Caco-2 (cell line): ENCODE measurements at regions of chr2 and their contacts with region 1.

Region 1: DNA sequence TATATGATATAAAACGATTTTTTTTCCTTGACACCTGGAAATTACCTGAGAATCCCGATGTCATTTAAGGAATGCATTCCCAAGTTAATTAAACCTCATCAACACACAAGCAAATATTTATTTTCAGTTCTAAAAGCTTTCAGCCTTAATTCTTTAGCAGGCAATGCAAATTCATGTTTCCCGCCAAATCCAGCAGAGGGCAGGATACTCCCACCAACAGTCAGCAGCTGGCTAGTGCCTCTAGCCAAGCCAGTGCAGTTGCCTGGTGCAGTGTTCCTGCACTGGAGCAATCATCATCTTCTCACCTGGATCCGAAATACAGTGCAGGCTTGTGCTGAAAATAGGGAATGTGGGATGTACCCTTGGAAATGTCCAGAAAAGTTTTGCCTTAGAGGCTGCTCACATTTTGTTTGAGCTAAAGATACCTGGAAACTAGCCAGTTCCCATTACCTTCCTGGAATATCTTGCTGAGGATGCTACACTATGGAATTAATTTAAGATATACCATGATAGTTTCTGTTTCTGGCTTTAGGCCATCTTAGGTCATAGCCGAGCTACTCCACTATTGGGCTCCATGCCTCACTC is 48.4 kb upstream of the CYTIP start:
- DNase-seq: peak; percentile 63 to 74
- H3K4me3 ChIP-seq: no peak overlapping the region
- H3K4me3 Mint-ChIP-seq: no peak overlapping the region
- H3K27ac Mint-ChIP-seq: no peak overlapping the region
- H3K4me1 ChIP-seq: no peaks in the 10 kb centered on the region
- H3K4me1 Mint-ChIP-seq: no peaks in the 10 kb centered on the region
- H3K27me3 ChIP-seq: no peaks in the 10 kb centered on the region
- H3K27me3 Mint-ChIP-seq: no peaks in the 10 kb centered on the region
- CTCF ChIP-seq: peak; percentile 78 to 87

Region 2: GRCh38 chr2:157327621-157328500 is 164.4 kb before region 1 on chr2:
- CTCF ChIA-PET with region 1: interaction called, 5 read pairs
- POLR2A ChIA-PET with region 1: no interaction called
- intact Hi-C with region 1: loop called (anchors 2 kb)
- DNase-seq: peak; percentile 84 to 85
- H3K4me3 ChIP-seq: no peak overlapping the region
- H3K4me3 Mint-ChIP-seq: no peak overlapping the region
- H3K27ac Mint-ChIP-seq: no peak overlapping the region
- H3K4me1 ChIP-seq: peaks cover 37% of the 10 kb centered on the region
- H3K4me1 Mint-ChIP-seq: peaks cover 11% of the 10 kb centered on the region
- H3K27me3 ChIP-seq: no peaks in the 10 kb centered on the region
- H3K27me3 Mint-ChIP-seq: no peaks in the 10 kb centered on the region
- CTCF ChIP-seq: peak; percentile 92 to 96

Region 3: GRCh38 chr2:157538064-157538463 is 45.8 kb after region 1 on chr2:
- CTCF ChIA-PET with region 1: no interaction called
- POLR2A ChIA-PET with region 1: no interaction called
- intact Hi-C with region 1: no loop called
- DNase-seq: no peak
- H3K4me3 ChIP-seq: no peak overlapping the region
- H3K4me3 Mint-ChIP-seq: no peak overlapping the region
- H3K27ac Mint-ChIP-seq: no peak overlapping the region
- H3K4me1 ChIP-seq: no peaks in the 10 kb centered on the region
- H3K4me1 Mint-ChIP-seq: no peaks in the 10 kb centered on the region
- H3K27me3 ChIP-seq: no peaks in the 10 kb centered on the region
- H3K27me3 Mint-ChIP-seq: no peaks in the 10 kb centered on the region
- CTCF ChIP-seq: no peak

Region 4: DNA sequence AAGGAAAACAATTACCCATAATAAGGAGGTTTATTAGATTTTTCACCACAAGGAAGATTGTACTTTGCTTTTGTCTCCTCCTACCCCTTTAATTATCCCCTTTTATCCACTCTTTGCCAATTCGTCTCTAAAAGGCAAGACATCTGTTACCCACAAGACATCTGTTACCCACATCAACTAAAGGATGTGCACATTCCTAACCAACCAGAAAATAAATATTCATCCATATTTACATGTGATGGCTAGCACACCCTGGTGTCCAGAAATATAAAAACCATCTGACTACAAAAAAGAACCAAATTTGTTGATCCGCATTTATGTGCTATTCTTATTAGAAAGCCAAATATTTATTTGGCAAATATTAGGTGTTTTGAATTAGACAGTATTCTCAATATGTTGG is 100.7 kb after region 1 on chr2:
- CTCF ChIA-PET with region 1: no interaction called
- POLR2A ChIA-PET with region 1: no interaction called
- intact Hi-C with region 1: loop called (anchors 1 kb)
- DNase-seq: no peak
- H3K4me3 ChIP-seq: no peak overlapping the region
- H3K4me3 Mint-ChIP-seq: no peak overlapping the region
- H3K27ac Mint-ChIP-seq: no peak overlapping the region
- H3K4me1 ChIP-seq: no peaks in the 10 kb centered on the region
- H3K4me1 Mint-ChIP-seq: no peaks in the 10 kb centered on the region
- H3K27me3 ChIP-seq: no peaks in the 10 kb centered on the region; the same call in 1 of the 2 replicates
- H3K27me3 Mint-ChIP-seq: peaks cover 16% of the 10 kb centered on the region
- CTCF ChIP-seq: peak; percentile 16 to 20

Region 5: GRCh38 chr2:157662401-157662800 is 170.1 kb after region 1 on chr2:
- CTCF ChIA-PET with region 1: no interaction called
- POLR2A ChIA-PET with region 1: no interaction called
- intact Hi-C with region 1: no loop called
- DNase-seq: no peak
- H3K4me3 ChIP-seq: no peak overlapping the region
- H3K4me3 Mint-ChIP-seq: no peak overlapping the region
- H3K27ac Mint-ChIP-seq: no peak overlapping the region
- H3K4me1 ChIP-seq: no peaks in the 10 kb centered on the region
- H3K4me1 Mint-ChIP-seq: no peaks in the 10 kb centered on the region
- H3K27me3 ChIP-seq: no peaks in the 10 kb centered on the region
- H3K27me3 Mint-ChIP-seq: peaks cover 3% of the 10 kb centered on the region
- CTCF ChIP-seq: no peak

Region 6: GRCh38 chr2:157751462-157752058 is 259.3 kb after region 1 on chr2:
- CTCF ChIA-PET with region 1: interaction called, 3 read pairs
- POLR2A ChIA-PET with region 1: no interaction called
- intact Hi-C with region 1: loop called (anchors 5 kb)
- DNase-seq: peak in 1 of 2 experiments; percentile 30
- H3K4me3 ChIP-seq: no peak overlapping the region
- H3K4me3 Mint-ChIP-seq: no peak overlapping the region
- H3K27ac Mint-ChIP-seq: no peak overlapping the region
- H3K4me1 ChIP-seq: no peaks in the 10 kb centered on the region
- H3K4me1 Mint-ChIP-seq: peaks cover 6% of the 10 kb centered on the region
- H3K27me3 ChIP-seq: no peaks in the 10 kb centered on the region
- H3K27me3 Mint-ChIP-seq: no peaks in the 10 kb centered on the region
- CTCF ChIP-seq: peak; percentile 45